Caco-2 (cell line): ENCODE measurements at regions of chr15 and their contacts with region 1.

Region 1: GRCh38 chr15:70636540-70637165 is 126.7 kb downstream of the UACA start:
- DNase-seq: peak; percentile 51 to 56
- H3K4me3 ChIP-seq: no peak overlapping the region
- H3K4me3 Mint-ChIP-seq: no peak overlapping the region
- H3K27ac Mint-ChIP-seq: peak overlapping the region; percentile 34
- H3K4me1 ChIP-seq: peaks cover 37% of the 10 kb centered on the region
- H3K4me1 Mint-ChIP-seq: peaks cover 43% of the 10 kb centered on the region
- H3K27me3 ChIP-seq: no peaks in the 10 kb centered on the region
- H3K27me3 Mint-ChIP-seq: no peaks in the 10 kb centered on the region
- CTCF ChIP-seq: peak; percentile 57 to 71

Region 2: DNA sequence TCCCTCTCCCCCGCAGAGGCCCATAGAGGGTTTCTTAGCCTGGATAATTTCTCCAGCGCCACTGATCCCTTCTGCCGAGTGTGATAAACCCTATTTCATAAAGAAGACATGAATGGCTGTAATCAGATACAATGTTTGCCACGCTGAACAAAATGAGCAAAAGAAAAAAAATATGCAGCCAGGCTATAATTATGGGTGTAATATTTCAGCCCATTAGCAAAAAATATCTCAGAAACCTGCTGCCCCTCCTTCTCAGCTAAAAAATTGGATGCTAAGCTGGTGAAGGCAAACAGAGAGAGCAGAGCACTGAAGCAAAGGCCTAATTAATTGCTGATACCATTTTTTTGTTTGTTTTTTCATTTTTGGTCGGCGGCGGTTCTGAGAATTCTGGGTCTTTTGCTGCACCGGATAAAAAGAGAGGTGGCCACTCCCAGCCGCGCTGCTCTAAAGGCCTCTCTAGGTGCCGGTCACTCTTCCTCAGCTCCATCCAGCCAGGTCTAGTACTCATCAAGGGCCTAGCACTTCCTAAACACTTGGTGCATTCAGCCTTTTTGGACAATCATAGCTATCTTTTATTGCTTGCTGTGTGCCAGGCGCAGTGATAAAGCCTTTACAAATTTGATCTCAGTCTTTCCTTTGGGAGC is 410.2 kb before region 1 on chr15:
- CTCF ChIA-PET with region 1: no interaction called
- POLR2A ChIA-PET with region 1: no interaction called
- intact Hi-C with region 1: no loop called
- DNase-seq: no peak
- H3K4me3 ChIP-seq: no peak overlapping the region
- H3K4me3 Mint-ChIP-seq: no peak overlapping the region
- H3K27ac Mint-ChIP-seq: no peak overlapping the region
- H3K4me1 ChIP-seq: no peaks in the 10 kb centered on the region
- H3K4me1 Mint-ChIP-seq: no peaks in the 10 kb centered on the region
- H3K27me3 ChIP-seq: no peaks in the 10 kb centered on the region
- H3K27me3 Mint-ChIP-seq: no peaks in the 10 kb centered on the region
- CTCF ChIP-seq: no peak

Region 3: DNA sequence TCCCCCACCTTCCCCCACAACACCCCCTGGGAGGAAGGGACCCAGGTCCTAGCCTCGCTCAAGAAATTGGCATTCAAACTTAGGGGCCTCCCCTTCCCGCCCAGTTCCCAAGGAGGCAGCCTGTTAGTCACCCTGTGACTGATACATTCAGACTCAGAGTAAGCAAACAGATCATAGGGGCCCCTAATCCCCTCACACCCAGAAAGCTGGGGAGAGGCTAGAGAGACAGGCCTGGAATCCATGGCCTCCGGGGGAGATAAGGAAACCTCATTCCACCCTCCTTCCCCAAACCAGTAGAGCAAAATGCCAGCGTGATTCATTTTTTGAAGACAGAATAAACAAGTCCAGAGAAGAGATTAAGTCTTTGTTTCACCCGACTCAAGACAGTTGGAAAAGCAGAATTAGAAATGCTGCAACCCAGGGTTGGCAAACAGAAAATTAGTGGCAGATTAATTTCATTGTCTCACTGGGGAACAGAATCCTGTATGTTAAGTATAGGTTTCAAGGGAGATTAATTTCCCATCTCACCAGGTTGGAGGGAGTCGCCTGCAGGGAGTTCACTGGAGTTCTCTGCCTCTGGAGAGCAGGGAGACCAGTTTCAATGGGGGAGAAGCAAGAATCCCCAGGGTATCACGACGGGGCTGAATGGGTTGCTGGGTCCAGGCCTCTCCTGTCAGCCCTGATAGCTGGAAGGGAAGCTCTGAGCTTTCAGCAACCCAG is 141.6 kb before region 1 on chr15:
- CTCF ChIA-PET with region 1: interaction called, 3 read pairs
- POLR2A ChIA-PET with region 1: no interaction called
- intact Hi-C with region 1: loop called (anchors 1 kb)
- DNase-seq: peak; percentile 94 to 97
- H3K4me3 ChIP-seq: peak overlapping the region; percentile 17; the same call in 1 of the 2 replicates
- H3K4me3 Mint-ChIP-seq: peak overlapping the region; percentile 68
- H3K27ac Mint-ChIP-seq: peak overlapping the region; percentile 98
- H3K4me1 ChIP-seq: peaks cover 41% of the 10 kb centered on the region
- H3K4me1 Mint-ChIP-seq: peaks cover 56% of the 10 kb centered on the region
- H3K27me3 ChIP-seq: no peaks in the 10 kb centered on the region
- H3K27me3 Mint-ChIP-seq: no peaks in the 10 kb centered on the region
- CTCF ChIP-seq: no peak

Region 4: DNA sequence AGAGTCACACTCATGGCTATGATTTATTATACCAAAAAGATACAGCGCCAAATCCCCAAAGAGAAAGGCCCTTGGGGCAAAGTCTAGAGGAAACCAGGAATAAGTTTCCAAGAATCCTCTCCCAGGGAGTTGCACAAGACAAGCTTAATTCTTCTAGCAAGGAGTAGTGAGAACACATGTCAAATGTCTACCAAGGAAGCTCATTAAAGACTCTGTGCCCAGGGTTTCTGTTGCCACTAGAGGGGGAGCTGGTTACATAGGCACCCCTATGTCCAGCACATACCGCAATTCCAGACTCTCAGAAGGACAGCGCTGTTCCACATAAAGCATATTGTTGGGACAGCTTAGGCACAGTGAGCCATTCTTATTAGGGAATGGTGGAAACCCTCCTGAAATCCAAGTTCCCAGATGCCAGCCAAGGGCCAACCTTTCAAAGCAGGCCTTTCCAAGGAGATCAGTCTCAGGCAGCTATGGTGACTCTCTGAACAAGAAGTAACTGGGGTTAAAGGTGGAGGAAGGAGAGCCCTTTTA is 67.5 kb before region 1 on chr15:
- CTCF ChIA-PET with region 1: interaction called, 40 read pairs
- POLR2A ChIA-PET with region 1: no interaction called
- intact Hi-C with region 1: loop called (anchors 1 kb)
- DNase-seq: peak; percentile 55 to 63
- H3K4me3 ChIP-seq: no peak overlapping the region
- H3K4me3 Mint-ChIP-seq: no peak overlapping the region
- H3K27ac Mint-ChIP-seq: peak overlapping the region; percentile 82
- H3K4me1 ChIP-seq: peaks cover 13% of the 10 kb centered on the region
- H3K4me1 Mint-ChIP-seq: peaks cover 13% of the 10 kb centered on the region
- H3K27me3 ChIP-seq: no peaks in the 10 kb centered on the region
- H3K27me3 Mint-ChIP-seq: no peaks in the 10 kb centered on the region
- CTCF ChIP-seq: peak; percentile 37 to 75

Region 5: DNA sequence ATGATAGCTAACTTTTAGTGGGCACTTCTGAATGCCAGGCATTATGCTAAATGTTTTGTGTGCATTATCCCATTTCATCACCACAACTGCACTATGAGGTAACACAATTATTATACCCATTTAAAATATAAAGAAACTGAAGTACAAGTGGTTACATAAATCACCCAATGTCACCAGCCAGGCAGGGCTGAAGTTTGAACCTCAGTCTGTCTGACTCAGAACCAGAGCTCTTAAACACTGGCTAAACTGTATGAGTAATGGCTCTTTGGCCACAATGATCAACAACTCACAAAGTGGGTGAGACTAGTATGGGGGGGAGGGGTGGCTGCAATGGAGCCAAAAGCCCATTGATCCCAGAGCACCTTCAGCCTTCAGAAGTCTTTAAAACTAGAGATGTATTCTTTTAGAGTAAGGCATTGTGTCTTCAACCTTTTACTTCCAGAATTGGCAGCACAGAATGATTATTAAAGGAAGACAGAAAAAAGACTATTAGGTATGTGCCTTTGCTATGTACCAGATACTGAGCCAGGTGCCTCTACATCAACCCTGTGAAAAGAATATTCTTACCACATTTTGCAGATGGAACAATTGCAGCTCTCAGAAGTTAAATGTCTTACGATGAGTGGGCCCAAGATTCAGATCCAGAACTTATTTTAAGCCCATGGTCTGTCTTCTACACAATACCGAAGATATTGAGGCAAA is 40.1 kb before region 1 on chr15:
- CTCF ChIA-PET with region 1: no interaction called
- POLR2A ChIA-PET with region 1: no interaction called
- intact Hi-C with region 1: loop called (anchors 1 kb)
- DNase-seq: no peak
- H3K4me3 ChIP-seq: no peak overlapping the region
- H3K4me3 Mint-ChIP-seq: no peak overlapping the region
- H3K27ac Mint-ChIP-seq: no peak overlapping the region
- H3K4me1 ChIP-seq: peaks cover 8% of the 10 kb centered on the region; the same call in 1 of the 2 replicates
- H3K4me1 Mint-ChIP-seq: peaks cover 17% of the 10 kb centered on the region
- H3K27me3 ChIP-seq: no peaks in the 10 kb centered on the region
- H3K27me3 Mint-ChIP-seq: no peaks in the 10 kb centered on the region
- CTCF ChIP-seq: no peak

Region 6: DNA sequence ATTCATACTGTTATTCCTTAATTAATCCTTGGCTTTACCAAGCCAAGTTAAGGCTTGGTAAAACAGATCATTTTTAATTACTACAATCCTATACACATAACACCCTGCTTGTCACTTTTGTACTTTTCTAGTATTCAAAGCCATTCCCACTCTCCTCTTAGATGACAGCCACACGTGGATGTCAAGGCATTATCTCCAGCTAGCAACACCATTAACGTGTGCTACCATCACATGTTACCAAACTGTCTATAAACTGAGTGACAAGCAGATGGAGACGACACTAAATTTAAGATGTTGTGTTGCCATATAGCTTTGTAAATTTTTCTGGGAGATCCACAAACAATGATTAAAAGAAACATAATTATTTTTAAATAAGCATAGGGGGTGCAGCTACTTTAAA is 23.0 kb after region 1 on chr15:
- CTCF ChIA-PET with region 1: no interaction called
- POLR2A ChIA-PET with region 1: no interaction called
- intact Hi-C with region 1: no loop called
- DNase-seq: no peak
- H3K4me3 ChIP-seq: no peak overlapping the region
- H3K4me3 Mint-ChIP-seq: no peak overlapping the region
- H3K27ac Mint-ChIP-seq: no peak overlapping the region
- H3K4me1 ChIP-seq: peaks cover 3% of the 10 kb centered on the region
- H3K4me1 Mint-ChIP-seq: no peaks in the 10 kb centered on the region
- H3K27me3 ChIP-seq: no peaks in the 10 kb centered on the region
- H3K27me3 Mint-ChIP-seq: no peaks in the 10 kb centered on the region
- CTCF ChIP-seq: no peak

Region 7: GRCh38 chr15:70955151-70955550 is 318.5 kb after region 1 on chr15:
- CTCF ChIA-PET with region 1: no interaction called
- POLR2A ChIA-PET with region 1: no interaction called
- intact Hi-C with region 1: no loop called
- DNase-seq: no peak
- H3K4me3 ChIP-seq: no peak overlapping the region
- H3K4me3 Mint-ChIP-seq: no peak overlapping the region
- H3K27ac Mint-ChIP-seq: no peak overlapping the region
- H3K4me1 ChIP-seq: no peaks in the 10 kb centered on the region
- H3K4me1 Mint-ChIP-seq: no peaks in the 10 kb centered on the region
- H3K27me3 ChIP-seq: no peaks in the 10 kb centered on the region
- H3K27me3 Mint-ChIP-seq: peaks cover 17% of the 10 kb centered on the region
- CTCF ChIP-seq: no peak